Activated CD4-positive, alpha-beta T cell treated with anti-CD3 and anti-CD28 coated beads, Interleukin-2, amount 10 ng/mL, durations not matched to agents 24 days and 14 days (primary cell): ENCODE measurements at regions of chr1 and their contacts with region 1.

Region 1: GRCh38 chr1:93629099-93630059 is 52.3 kb downstream of the BCAR3 start:
- DNase-seq: peak; percentile 84
- H3K4me3 Mint-ChIP-seq: no peak overlapping the region
- H3K27ac Mint-ChIP-seq: no peak overlapping the region
- H3K4me1 Mint-ChIP-seq: no peaks in the 10 kb centered on the region
- H3K27me3 Mint-ChIP-seq: peaks cover 10% of the 10 kb centered on the region

Region 2: GRCh38 chr1:93304716-93305138 is 324.7 kb before region 1 on chr1:
- intact Hi-C with region 1: loop called (anchors 10 kb)
- DNase-seq: peak; percentile 86
- H3K4me3 Mint-ChIP-seq: no peak overlapping the region
- H3K27ac Mint-ChIP-seq: no peak overlapping the region
- H3K4me1 Mint-ChIP-seq: no peaks in the 10 kb centered on the region
- H3K27me3 Mint-ChIP-seq: no peaks in the 10 kb centered on the region

Region 3: DNA sequence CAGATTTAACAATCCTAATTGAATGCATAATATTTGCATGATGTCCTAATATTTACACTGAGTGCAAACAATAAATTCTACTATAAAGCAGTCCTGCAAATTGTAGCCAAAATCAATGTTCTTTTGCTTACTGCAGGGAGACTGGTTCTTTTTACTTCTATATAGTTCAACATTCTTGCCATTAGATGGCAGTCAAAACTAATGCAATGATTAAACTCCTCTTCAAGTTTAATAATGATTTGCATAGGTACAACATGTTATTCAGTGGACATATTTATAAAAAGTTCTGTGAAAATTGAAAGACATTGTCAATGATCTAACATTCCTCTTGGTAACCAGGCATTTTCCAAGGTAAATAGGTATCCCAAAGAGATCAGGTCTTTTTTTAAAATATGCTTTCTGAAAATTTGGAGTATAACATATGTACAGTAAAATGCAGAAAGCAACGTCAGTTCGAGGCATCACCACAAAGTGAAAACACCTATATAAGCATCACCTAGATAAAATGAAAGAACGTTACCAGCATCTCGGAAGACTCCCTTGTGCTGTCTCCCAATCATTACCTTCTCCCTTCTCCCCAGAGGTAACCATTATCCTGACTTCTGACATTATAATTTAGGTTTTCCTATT is 191.3 kb before region 1 on chr1:
- intact Hi-C with region 1: loop called (anchors 2 kb)
- DNase-seq: no peak
- H3K4me3 Mint-ChIP-seq: no peak overlapping the region
- H3K27ac Mint-ChIP-seq: no peak overlapping the region
- H3K4me1 Mint-ChIP-seq: no peaks in the 10 kb centered on the region
- H3K27me3 Mint-ChIP-seq: peaks cover 25% of the 10 kb centered on the region

Region 4: GRCh38 chr1:93502561-93502960 is 126.8 kb before region 1 on chr1:
- intact Hi-C with region 1: no loop called
- DNase-seq: no peak
- H3K4me3 Mint-ChIP-seq: no peak overlapping the region
- H3K27ac Mint-ChIP-seq: no peak overlapping the region
- H3K4me1 Mint-ChIP-seq: no peaks in the 10 kb centered on the region
- H3K27me3 Mint-ChIP-seq: peaks cover 9% of the 10 kb centered on the region

Region 5: GRCh38 chr1:93576346-93576745 is 53.0 kb before region 1 on chr1:
- intact Hi-C with region 1: no loop called
- DNase-seq: no peak
- H3K4me3 Mint-ChIP-seq: no peak overlapping the region
- H3K27ac Mint-ChIP-seq: no peak overlapping the region
- H3K4me1 Mint-ChIP-seq: no peaks in the 10 kb centered on the region
- H3K27me3 Mint-ChIP-seq: no peaks in the 10 kb centered on the region

Region 6: DNA sequence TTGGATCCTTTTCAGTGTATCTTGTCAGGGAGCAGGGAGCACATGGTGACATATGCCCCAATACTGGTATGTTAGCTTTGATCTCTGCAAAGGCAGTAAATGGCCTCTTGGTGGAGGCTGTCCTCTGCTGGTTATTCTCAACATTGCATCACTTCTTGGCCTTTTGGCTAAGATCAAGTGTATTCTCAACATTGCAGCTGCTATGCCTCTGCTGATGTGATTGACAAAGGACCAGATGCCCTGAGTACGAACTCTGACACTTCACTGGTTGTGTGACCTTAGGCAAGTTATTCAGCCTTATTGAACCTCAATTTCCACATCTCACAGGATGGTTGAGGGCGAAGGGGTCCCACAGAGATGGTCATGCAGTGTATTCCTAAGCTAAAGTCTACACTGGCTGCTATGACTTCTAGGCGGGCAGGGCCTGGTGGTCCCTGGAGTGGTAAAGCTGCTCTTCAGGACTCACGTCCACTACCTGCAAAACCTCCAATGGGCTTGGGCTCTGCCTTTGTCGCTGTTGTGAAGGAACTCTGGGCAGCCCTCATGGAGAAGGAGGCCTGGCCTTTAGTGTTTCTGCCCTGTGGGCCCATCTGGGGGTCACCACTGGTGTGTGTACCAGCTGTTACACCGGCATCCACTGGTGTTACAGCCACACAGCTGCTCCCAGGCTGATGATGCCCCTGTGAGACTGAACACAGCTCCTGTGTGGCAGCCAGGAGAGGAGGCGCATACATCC is 184.8 kb after region 1 on chr1:
- intact Hi-C with region 1: loop called (anchors 1 kb)
- DNase-seq: peak; percentile 88
- H3K4me3 Mint-ChIP-seq: no peak overlapping the region
- H3K27ac Mint-ChIP-seq: no peak overlapping the region
- H3K4me1 Mint-ChIP-seq: peaks cover 13% of the 10 kb centered on the region
- H3K27me3 Mint-ChIP-seq: no peaks in the 10 kb centered on the region

Region 7: GRCh38 chr1:93878889-93879586 is 249.7 kb after region 1 on chr1 and contains the start of gene DNTTIP2:
- intact Hi-C with region 1: loop called (anchors 1 kb)
- DNase-seq: peak; percentile 97
- H3K4me3 Mint-ChIP-seq: peak within 1 kb of the TSS; percentile 93
- H3K27ac Mint-ChIP-seq: peak within 1 kb of the TSS; percentile 97
- H3K4me1 Mint-ChIP-seq: peaks cover 33% of the 10 kb centered on the region
- H3K27me3 Mint-ChIP-seq: no peaks in the 10 kb centered on the region
- total RNA-seq, gene DNTTIP2: 85.4 and 89.9 TPM in 2 replicates